Activated CD4-positive, alpha-beta memory T cell treated with anti-CD3 and anti-CD28 coated beads for 36 hours (primary cell): ENCODE measurements at regions of chr2 and their contacts with region 1.

Region 1: DNA sequence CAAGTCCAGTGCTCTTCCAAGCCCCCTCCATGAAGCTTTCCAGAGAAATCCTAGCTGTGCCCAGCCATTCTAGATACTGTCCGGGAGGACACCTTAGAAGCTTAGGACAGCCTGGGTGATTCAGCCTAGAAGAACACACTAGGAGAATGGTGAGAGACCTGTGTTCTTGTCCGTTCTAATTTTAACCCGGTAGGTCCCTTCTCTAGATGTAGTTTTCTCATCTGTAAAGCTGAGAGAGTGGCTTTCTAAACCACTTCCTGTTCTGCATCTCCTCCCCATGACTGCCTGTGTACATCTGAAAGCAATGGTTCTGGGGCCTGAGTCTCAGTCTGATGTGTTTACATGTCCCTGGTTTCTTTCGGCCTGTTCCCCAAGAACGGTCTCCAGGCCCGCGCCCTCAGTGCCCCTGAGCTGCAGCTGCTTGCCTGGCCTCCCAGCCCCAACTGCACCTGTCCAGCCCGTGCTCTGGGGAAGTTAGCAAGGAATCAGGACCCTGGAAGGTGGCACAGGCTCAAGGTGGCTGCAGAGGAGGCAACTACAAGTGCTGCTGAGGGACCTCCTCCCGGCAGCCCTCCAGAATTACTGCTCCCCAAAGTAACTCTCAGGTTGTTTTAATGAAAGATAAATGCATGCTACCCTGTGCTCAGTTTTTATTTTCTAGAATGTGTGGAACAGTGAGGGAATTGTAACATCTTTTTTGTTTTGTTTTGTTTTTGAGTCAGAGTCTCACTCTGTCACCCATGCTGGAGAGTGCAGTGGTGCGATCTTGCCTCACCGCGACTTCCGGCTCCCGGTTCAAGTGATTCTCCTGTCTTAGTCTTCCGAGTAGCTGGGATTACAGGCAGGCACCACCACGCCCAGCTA is 105.9 kb downstream of the LBH start:
- DNase-seq: peak; percentile 83
- H3K4me3 Mint-ChIP-seq: peak overlapping the region; percentile 68
- H3K27ac Mint-ChIP-seq: peak overlapping the region; percentile 96
- H3K4me1 Mint-ChIP-seq: peaks cover 75% of the 10 kb centered on the region
- H3K27me3 Mint-ChIP-seq: no peaks in the 10 kb centered on the region

Region 2: GRCh38 chr2:30225131-30225762 is 112.0 kb before region 1 on chr2:
- CTCF ChIA-PET with region 1: interaction called, 3 read pairs
- POLR2A ChIA-PET with region 1: interaction called, 9 read pairs
- intact Hi-C with region 1: loop called (anchors 2 kb)
- DNase-seq: peak; percentile 62
- H3K4me3 Mint-ChIP-seq: peak overlapping the region; percentile 83
- H3K27ac Mint-ChIP-seq: peak overlapping the region; percentile 97
- H3K4me1 Mint-ChIP-seq: peaks cover 70% of the 10 kb centered on the region
- H3K27me3 Mint-ChIP-seq: no peaks in the 10 kb centered on the region

Region 3: GRCh38 chr2:30239308-30239985 is 97.8 kb before region 1 on chr2:
- CTCF ChIA-PET with region 1: interaction called, 12 read pairs
- POLR2A ChIA-PET with region 1: interaction called, 4 read pairs
- intact Hi-C with region 1: loop called (anchors 1 kb)
- DNase-seq: peak; percentile 87
- H3K4me3 Mint-ChIP-seq: peak overlapping the region; percentile 54
- H3K27ac Mint-ChIP-seq: peak overlapping the region; percentile 86
- H3K4me1 Mint-ChIP-seq: peaks cover 93% of the 10 kb centered on the region
- H3K27me3 Mint-ChIP-seq: no peaks in the 10 kb centered on the region

Region 4: DNA sequence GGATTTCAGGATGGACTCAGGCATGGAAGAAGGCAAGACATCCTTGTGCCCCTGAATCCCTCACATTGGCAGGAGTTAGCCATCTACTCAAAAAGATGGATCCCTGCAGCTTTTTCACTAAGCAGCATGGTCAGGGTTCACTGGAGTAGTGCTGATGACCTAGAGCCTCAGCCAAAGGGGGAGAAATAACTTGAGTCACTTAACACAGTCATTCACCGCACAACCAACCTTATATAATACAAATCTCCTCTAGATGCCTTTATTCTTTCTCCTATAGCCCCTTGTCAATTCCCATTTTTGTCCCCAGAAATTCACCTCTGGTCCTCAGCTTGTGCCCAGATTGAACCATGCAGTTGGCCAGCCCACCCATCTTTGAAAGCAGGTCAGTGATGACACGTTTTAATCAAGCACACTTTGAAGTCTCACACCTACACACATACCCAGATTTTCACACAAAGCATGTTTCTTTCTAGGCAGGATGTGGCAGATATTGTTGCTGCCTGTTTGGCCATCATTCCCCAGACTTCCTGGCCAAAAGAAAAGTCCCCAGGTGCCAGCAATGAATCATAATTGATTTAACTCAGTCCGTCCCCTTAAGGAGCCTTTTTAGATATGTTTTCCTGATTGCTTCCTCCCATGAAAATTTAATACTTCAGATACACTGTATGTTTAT is 21.7 kb before region 1 on chr2:
- CTCF ChIA-PET with region 1: no interaction called
- POLR2A ChIA-PET with region 1: no interaction called
- intact Hi-C with region 1: loop called (anchors 1 kb)
- DNase-seq: peak; percentile 47
- H3K4me3 Mint-ChIP-seq: no peak overlapping the region
- H3K27ac Mint-ChIP-seq: peak overlapping the region; percentile 71
- H3K4me1 Mint-ChIP-seq: peaks cover 36% of the 10 kb centered on the region
- H3K27me3 Mint-ChIP-seq: no peaks in the 10 kb centered on the region

Region 5: GRCh38 chr2:30447149-30448045 is 110.2 kb after region 1 on chr2 and contains the start of gene LCLAT1:
- CTCF ChIA-PET with region 1: interaction called, 5 read pairs
- POLR2A ChIA-PET with region 1: interaction called, 3 read pairs
- intact Hi-C with region 1: loop called (anchors 1 kb)
- DNase-seq: peak; percentile 90
- H3K4me3 Mint-ChIP-seq: peak within 1 kb of the TSS; percentile 88
- H3K27ac Mint-ChIP-seq: peak within 1 kb of the TSS; percentile 95
- H3K4me1 Mint-ChIP-seq: peaks cover 24% of the 10 kb centered on the region
- H3K27me3 Mint-ChIP-seq: no peaks in the 10 kb centered on the region
- total RNA-seq, gene LCLAT1: 21.5 to 24.3 TPM

Region 6: DNA sequence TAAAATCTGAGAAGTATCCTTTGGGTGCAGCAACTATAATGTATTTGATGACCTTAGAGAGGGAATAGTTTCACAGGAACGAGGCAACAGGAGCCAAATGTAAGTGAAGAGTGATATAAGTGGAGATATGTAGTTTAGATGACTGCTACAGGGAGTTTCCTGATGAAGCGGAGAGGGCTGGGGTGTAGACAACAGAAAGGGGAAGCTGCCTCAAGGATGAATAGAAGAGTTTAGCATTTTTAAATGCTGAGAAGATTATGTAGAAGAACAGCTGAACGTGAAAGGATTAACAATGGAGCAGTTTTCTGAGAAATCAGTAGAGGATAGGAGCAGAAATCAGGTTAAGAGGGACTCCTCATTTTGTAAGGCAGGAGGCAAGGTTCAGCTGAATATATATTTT is 243.2 kb after region 1 on chr2:
- CTCF ChIA-PET with region 1: no interaction called
- POLR2A ChIA-PET with region 1: no interaction called
- intact Hi-C with region 1: no loop called
- DNase-seq: no peak
- H3K4me3 Mint-ChIP-seq: no peak overlapping the region
- H3K27ac Mint-ChIP-seq: no peak overlapping the region
- H3K4me1 Mint-ChIP-seq: peaks cover 3% of the 10 kb centered on the region
- H3K27me3 Mint-ChIP-seq: no peaks in the 10 kb centered on the region